ENCODE measurements at regions of chr19 and their contacts with region 1.

Region 1: DNA sequence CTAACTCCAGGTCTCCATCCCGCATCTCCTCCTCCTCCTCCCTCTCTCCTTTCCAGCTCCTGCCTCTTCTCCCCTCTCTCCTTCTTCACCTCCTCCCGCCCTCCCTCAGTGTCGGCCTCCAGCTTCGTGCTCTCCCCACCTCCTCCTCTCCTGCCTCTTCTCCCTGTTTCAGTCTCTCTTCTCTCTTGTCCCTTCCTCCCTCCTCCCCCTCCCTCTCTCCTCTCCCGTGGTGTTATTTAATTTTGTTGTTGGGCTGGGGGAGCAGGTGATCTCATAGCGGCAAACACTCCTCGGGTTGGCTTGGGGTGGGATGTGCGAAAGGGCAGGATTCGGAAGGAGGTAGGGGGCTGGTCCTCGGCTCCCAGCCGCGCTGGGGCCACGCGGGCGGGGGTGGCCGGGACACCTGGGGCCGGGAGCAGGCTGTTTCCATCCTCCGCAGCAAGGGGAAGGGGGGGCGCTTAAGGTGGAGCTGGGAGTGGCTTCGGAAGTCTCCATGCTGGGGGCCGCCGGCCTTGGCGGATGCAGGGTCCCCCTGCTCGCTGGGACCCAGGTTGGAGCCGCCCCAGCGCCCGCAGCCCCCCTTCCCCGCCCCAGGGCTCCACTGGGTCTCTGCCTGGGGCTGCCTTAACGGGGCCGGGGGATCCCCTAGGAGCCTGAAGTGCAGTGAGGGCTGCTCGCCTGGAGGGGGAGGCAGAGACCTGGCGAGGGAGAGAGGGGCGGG is at the start of gene CA11:
- DNase-seq: peak; percentile 96
- ATAC-seq: peak; percentile 85
- H3K4me3 Mint-ChIP-seq: peak within 1 kb of the TSS; percentile 79
- H3K27ac Mint-ChIP-seq: peak within 1 kb of the TSS; percentile 88
- H3K4me1 Mint-ChIP-seq: peaks cover 44% of the 10 kb centered on the region
- H3K27me3 Mint-ChIP-seq: no peaks in the 10 kb centered on the region
- total RNA-seq, gene CA11: 11.5 to 18.0 TPM

Region 2: GRCh38 chr19:48578891-48579290 is 67.3 kb before region 1 on chr19:
- CTCF ChIA-PET with region 1: no interaction called
- POLR2A ChIA-PET with region 1: no interaction called
- intact Hi-C with region 1: no loop called
- DNase-seq: no peak
- ATAC-seq: no peak
- H3K4me3 Mint-ChIP-seq: no peak overlapping the region
- H3K27ac Mint-ChIP-seq: no peak overlapping the region
- H3K4me1 Mint-ChIP-seq: no peaks in the 10 kb centered on the region
- H3K27me3 Mint-ChIP-seq: no peaks in the 10 kb centered on the region

Region 3: GRCh38 chr19:48618916-48619691 is 27.1 kb before region 1 on chr19 and contains the starts of genes RPL18 and SPHK2:
- CTCF ChIA-PET with region 1: interaction called, 3 read pairs
- POLR2A ChIA-PET with region 1: interaction called, 9 read pairs
- intact Hi-C with region 1: loop called in 1 of 2 experiments (anchors 1 kb)
- DNase-seq: peak; percentile 97
- ATAC-seq: peak; percentile 82
- H3K4me3 Mint-ChIP-seq: peak within 1 kb of the TSS; percentile 94
- H3K27ac Mint-ChIP-seq: peak within 1 kb of the TSS; percentile 97
- H3K4me1 Mint-ChIP-seq: peaks cover 48% of the 10 kb centered on the region
- H3K27me3 Mint-ChIP-seq: no peaks in the 10 kb centered on the region
- total RNA-seq, gene RPL18: 2,026 to 2,191 TPM
- total RNA-seq, gene SPHK2: 27.0 TPM

Region 4: GRCh38 chr19:48660854-48661731 is 14.9 kb after region 1 on chr19:
- CTCF ChIA-PET with region 1: interaction called, 6 read pairs
- POLR2A ChIA-PET with region 1: no interaction called
- intact Hi-C with region 1: loop called in 1 of 2 experiments (anchors 1 kb)
- DNase-seq: peak; percentile 88
- ATAC-seq: peak; percentile 94
- H3K4me3 Mint-ChIP-seq: peak overlapping the region; percentile 10
- H3K27ac Mint-ChIP-seq: peak overlapping the region; percentile 94
- H3K4me1 Mint-ChIP-seq: peaks cover 7% of the 10 kb centered on the region
- H3K27me3 Mint-ChIP-seq: no peaks in the 10 kb centered on the region

Region 5: DNA sequence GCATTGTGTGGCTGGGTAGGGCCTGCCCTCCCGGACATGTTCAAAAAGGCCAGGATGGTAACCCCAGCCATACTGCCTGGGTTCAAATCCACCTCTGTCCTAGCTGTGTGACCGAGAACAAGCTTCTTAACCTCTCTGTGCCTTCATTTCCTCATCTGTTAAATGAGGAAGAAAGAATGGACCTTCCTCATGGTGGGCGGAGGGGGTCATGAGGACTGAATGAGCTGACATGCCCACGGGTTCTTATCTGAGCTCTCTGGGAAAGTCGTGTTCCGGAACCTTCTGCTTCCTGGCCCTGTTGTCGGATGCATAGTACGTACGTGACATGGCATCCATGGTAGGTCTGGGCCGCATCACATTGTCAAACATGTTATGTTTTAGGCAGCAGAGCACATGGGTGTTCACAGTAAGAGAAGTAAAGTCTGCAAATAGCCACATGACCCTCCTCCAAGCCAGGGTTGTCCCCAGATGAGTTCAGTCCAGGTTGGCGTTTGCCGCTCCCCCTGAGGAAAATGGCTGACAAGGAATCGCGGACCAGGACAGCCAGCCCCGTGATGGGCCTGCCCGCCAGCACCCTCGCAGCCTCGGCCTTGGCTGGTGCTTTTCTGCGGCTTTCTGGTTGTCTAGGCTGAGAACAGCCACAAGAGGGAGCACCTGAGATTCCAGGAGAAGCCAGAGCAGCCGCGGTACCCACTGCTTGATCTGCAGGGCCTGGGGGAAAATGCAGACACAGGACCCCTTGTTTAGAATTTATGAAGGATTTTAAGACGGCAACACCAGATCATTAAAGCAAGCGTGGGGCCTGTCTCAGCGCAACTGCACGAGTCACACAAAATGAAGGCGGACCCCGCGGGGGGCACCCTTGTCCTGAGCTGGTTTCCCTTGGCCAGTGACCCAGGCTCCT is 29.0 kb after region 1 on chr19:
- CTCF ChIA-PET with region 1: interaction called, 5 read pairs
- POLR2A ChIA-PET with region 1: no interaction called
- intact Hi-C with region 1: loop called (anchors 1 to 2 kb)
- DNase-seq: peak; percentile 86
- ATAC-seq: peak; percentile 97
- H3K4me3 Mint-ChIP-seq: no peak overlapping the region
- H3K27ac Mint-ChIP-seq: no peak overlapping the region
- H3K4me1 Mint-ChIP-seq: peaks cover 7% of the 10 kb centered on the region
- H3K27me3 Mint-ChIP-seq: no peaks in the 10 kb centered on the region

Region 6: DNA sequence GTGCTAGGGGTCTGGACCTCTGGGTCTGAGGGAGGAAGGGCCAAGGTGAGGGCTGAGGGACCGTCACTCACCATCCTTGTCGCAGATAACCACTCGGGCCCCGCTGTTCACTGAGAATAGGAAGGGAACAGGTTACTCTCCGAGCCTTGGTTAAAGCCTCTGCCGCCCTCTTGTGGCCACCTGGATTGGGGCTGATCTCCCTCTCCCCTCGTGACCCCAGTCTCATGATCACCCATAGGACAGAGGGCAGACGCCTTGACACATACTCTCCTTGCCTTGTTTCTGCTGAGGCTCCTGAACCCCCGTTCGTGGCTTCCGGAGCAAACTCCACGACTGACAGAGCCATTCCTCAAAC is 189.6 kb after region 1 on chr19:
- CTCF ChIA-PET with region 1: interaction called, 6 read pairs
- POLR2A ChIA-PET with region 1: interaction called, 4 read pairs
- intact Hi-C with region 1: loop called (anchors 1 to 5 kb)
- DNase-seq: peak; percentile 98
- ATAC-seq: peak; percentile 99
- H3K4me3 Mint-ChIP-seq: peak overlapping the region; percentile 71
- H3K27ac Mint-ChIP-seq: peak overlapping the region; percentile 83
- H3K4me1 Mint-ChIP-seq: peaks cover 18% of the 10 kb centered on the region
- H3K27me3 Mint-ChIP-seq: no peaks in the 10 kb centered on the region

Region 7: GRCh38 chr19:48842789-48843162 is 196.6 kb after region 1 on chr19:
- CTCF ChIA-PET with region 1: interaction called, 13 read pairs
- POLR2A ChIA-PET with region 1: no interaction called
- intact Hi-C with region 1: loop called (anchors 1 to 5 kb)
- DNase-seq: peak; percentile 62
- ATAC-seq: peak; percentile 53
- H3K4me3 Mint-ChIP-seq: no peak overlapping the region
- H3K27ac Mint-ChIP-seq: no peak overlapping the region
- H3K4me1 Mint-ChIP-seq: no peaks in the 10 kb centered on the region
- H3K27me3 Mint-ChIP-seq: no peaks in the 10 kb centered on the region

Measured in activated CD4-positive, alpha-beta T cell treated with anti-CD3 and anti-CD28 coated beads for 36 hours (primary cell).